MCF 10A (cell line): ENCODE measurements at regions of chr19 and their contacts with region 1.

Region 1: DNA sequence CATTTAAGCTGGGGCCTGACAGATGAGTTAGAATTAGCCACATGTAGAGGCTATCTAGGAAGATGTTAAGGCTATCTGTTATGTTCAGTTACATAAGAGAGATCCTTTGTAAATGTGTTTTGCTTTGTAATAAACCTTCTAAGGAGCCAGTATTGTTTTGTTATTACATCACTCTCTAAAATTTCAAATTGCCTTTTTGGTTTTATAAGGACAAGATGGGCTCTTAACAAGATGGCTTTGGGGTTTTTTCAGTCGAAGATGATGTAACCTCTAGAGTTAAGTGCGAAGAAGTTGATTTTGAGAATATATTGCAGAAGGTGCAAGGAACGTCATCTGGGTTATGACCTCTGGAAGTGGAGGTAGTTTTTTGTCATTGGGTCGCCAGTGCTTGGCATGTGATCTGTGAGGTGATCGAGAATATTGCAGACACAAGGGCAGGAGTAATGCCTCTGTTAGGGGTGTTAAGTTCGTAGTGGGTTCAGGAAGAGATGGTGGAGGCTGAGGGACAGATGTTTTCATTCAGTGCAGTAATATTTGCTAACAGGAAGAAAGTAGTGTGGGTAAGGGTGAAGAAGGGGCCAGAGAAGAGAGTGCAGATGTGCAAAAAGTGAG is 12.7 kb downstream of the LSM14A start:
- DNase-seq: no peak
- H3K4me3 Mint-ChIP-seq: no peak overlapping the region
- H3K27ac Mint-ChIP-seq: no peak overlapping the region
- H3K4me1 Mint-ChIP-seq: peaks cover 47% of the 10 kb centered on the region
- H3K27me3 Mint-ChIP-seq: no peaks in the 10 kb centered on the region
- CTCF ChIP-seq: no peak

Region 2: DNA sequence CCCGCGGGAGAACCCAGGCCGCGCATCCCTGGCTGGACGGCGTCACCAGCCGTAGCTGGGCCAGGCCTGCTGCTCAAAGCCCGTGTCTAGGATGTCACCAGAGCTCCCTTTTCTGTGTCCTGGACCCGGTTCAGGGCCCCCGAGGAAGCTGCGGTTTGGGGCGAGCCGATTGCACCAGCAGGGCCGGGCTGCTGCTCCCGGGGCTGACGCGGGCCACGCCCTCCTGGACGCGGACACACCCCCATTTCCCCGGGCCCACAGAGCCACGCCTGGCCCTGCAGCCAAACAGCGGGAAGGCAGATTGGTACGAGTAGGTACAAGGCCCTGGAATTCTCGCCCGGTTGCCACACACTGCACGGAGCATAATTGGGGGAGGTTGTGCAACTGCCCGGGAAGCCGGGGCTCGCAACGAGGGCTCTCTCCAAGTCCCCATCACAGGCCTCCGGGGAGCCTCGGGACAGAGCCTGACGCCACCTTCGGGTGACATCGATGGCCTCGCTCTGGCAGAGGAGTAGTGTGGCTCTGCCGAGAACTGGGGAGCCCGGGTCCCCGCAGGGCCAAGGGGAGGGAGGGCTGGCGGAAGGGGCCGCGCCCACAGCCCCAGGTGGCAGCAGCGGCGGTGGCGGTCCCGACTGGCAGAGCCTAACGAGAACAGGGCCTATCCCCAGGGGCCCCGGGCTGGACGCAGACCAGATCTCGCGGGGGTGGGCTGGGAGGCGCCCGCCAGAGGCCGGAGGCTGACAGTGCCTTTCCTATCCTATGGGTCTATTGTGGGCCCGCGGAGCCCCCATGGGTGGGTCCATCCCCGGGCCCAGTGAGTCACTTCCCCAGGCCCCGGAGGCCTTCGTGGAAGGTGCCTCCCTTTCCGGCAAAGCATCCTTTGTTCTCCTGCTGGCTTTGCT is 364.9 kb before region 1 on chr19:
- CTCF ChIA-PET with region 1: no interaction called
- POLR2A ChIA-PET with region 1: no interaction called
- intact Hi-C with region 1: no loop called
- DNase-seq: peak; percentile 99
- H3K4me3 Mint-ChIP-seq: peak overlapping the region; percentile 70
- H3K27ac Mint-ChIP-seq: peak overlapping the region; percentile 35
- H3K4me1 Mint-ChIP-seq: peaks cover 8% of the 10 kb centered on the region
- H3K27me3 Mint-ChIP-seq: no peaks in the 10 kb centered on the region
- CTCF ChIP-seq: no peak

Region 3: GRCh38 chr19:33982706-33983105 is 202.3 kb before region 1 on chr19:
- CTCF ChIA-PET with region 1: no interaction called
- POLR2A ChIA-PET with region 1: no interaction called
- intact Hi-C with region 1: no loop called
- DNase-seq: no peak
- H3K4me3 Mint-ChIP-seq: no peak overlapping the region
- H3K27ac Mint-ChIP-seq: no peak overlapping the region
- H3K4me1 Mint-ChIP-seq: no peaks in the 10 kb centered on the region
- H3K27me3 Mint-ChIP-seq: peaks cover 11% of the 10 kb centered on the region
- CTCF ChIP-seq: no peak

Region 4: GRCh38 chr19:34171877-34172660 is 12.9 kb before region 1 on chr19 and contains the start of gene LSM14A:
- CTCF ChIA-PET with region 1: interaction called, 6 read pairs
- POLR2A ChIA-PET with region 1: interaction called, 11 read pairs
- intact Hi-C with region 1: no loop called
- DNase-seq: peak; percentile 90
- H3K4me3 Mint-ChIP-seq: peak within 1 kb of the TSS; percentile 86
- H3K27ac Mint-ChIP-seq: peak within 1 kb of the TSS; percentile 96
- H3K4me1 Mint-ChIP-seq: peaks cover 8% of the 10 kb centered on the region
- H3K27me3 Mint-ChIP-seq: peaks cover 17% of the 10 kb centered on the region
- CTCF ChIP-seq: no peak
- total RNA-seq, gene LSM14A: 93.7 and 100 TPM in 2 replicates